Mammary epithelial cell (primary cell): ENCODE measurements at regions of chr18 and their contacts with region 1.

Region 1: DNA sequence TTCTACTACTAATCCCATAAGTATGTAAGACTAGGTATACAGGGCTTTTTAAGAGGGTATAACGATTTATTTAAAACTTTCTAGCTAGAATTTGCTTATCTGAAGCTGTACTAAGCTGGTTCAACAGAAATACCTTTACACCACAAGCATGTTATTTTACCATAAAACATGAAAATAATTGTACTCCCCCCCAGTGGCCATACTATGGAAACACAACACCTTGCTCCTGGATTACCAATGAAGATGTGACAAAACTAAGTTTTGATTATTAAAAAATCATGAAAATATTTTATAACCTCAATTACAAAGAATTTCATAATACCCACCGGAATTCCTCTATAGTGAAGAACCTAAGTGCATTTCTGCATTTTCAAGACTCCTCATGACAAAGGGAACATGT is 27.3 kb downstream of the LPIN2 start:
- DNase-seq: peak; percentile 13
- H3K4me3 ChIP-seq: no peak overlapping the region
- H3K27ac ChIP-seq: no peak overlapping the region
- H3K4me1 ChIP-seq: peaks cover 8% of the 10 kb centered on the region
- H3K27me3 ChIP-seq: no peaks in the 10 kb centered on the region
- CTCF ChIP-seq: peak; percentile 47 to 48

Region 2: GRCh38 chr18:2948038-2948437 is 37.6 kb before region 1 on chr18:
- CTCF ChIA-PET with region 1: interaction called, 3 read pairs
- dilution Hi-C with region 1: no loop called
- in situ Hi-C with region 1: no loop called
- intact Hi-C with region 1: loop called (anchors 2 kb)
- DNase-seq: peak; percentile 61
- H3K4me3 ChIP-seq: no peak overlapping the region
- H3K27ac ChIP-seq: no peak overlapping the region
- H3K4me1 ChIP-seq: no peaks in the 10 kb centered on the region
- H3K27me3 ChIP-seq: no peaks in the 10 kb centered on the region
- CTCF ChIP-seq: peak; percentile 34 to 53

Region 3: DNA sequence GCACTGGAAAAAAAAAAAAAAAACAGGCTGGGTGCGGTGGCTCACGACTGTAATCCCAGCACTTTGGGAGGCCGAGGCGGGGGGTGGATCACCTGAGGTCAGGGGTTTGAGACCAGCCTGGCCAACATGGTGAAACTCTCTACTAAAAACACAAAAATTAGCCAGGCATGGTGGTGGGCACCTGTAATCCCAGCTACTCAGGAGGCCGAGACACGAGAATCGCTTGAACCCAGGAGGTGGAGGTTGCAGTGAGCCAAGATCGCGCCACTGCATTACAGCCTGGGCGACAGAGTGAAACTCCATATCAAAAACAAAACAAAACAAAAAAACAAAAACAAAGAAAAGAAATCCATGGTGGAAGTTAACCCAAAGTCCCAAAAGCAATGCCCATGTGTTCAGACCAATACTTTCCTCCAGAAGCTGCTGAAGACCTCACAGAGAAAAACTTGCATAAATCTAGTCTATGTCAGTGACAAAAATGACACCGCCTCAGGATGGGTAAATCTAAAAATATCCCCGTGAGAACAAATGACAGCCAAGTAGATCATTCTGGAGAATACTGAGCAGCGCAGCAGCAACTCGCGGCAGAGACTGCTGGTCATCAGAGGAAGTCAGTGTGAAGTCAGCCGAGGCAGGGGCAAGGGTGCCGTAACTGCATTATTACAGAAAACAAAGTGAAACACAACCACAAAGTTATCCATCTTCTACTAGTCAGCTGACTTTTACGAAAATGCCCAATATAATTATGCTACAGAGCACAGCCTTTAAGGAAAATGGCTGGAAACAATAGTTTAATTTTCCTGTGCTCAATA is 13.7 kb before region 1 on chr18:
- CTCF ChIA-PET with region 1: no interaction called
- dilution Hi-C with region 1: no loop called
- in situ Hi-C with region 1: no loop called
- intact Hi-C with region 1: no loop called
- DNase-seq: no peak
- H3K4me3 ChIP-seq: no peak overlapping the region
- H3K27ac ChIP-seq: no peak overlapping the region
- H3K4me1 ChIP-seq: no peaks in the 10 kb centered on the region
- H3K27me3 ChIP-seq: no peaks in the 10 kb centered on the region
- CTCF ChIP-seq: no peak

Region 4: GRCh38 chr18:3012964-3013804 is 27.6 kb after region 1 on chr18 and contains the start of gene LPIN2:
- CTCF ChIA-PET with region 1: no interaction called
- dilution Hi-C with region 1: no loop called
- in situ Hi-C with region 1: no loop called
- intact Hi-C with region 1: no loop called
- DNase-seq: peak; percentile 91
- H3K4me3 ChIP-seq: peak within 1 kb of the TSS; percentile 70 to 74 (median 72)
- H3K27ac ChIP-seq: peak within 1 kb of the TSS; percentile 51
- H3K4me1 ChIP-seq: peaks cover 18% of the 10 kb centered on the region
- H3K27me3 ChIP-seq: no peaks in the 10 kb centered on the region
- CTCF ChIP-seq: no peak
- total RNA-seq, gene LPIN2: 9.9 to 20.3 TPM